ENCODE measurements at regions of chr6 and their contacts with region 1.

Region 1: DNA sequence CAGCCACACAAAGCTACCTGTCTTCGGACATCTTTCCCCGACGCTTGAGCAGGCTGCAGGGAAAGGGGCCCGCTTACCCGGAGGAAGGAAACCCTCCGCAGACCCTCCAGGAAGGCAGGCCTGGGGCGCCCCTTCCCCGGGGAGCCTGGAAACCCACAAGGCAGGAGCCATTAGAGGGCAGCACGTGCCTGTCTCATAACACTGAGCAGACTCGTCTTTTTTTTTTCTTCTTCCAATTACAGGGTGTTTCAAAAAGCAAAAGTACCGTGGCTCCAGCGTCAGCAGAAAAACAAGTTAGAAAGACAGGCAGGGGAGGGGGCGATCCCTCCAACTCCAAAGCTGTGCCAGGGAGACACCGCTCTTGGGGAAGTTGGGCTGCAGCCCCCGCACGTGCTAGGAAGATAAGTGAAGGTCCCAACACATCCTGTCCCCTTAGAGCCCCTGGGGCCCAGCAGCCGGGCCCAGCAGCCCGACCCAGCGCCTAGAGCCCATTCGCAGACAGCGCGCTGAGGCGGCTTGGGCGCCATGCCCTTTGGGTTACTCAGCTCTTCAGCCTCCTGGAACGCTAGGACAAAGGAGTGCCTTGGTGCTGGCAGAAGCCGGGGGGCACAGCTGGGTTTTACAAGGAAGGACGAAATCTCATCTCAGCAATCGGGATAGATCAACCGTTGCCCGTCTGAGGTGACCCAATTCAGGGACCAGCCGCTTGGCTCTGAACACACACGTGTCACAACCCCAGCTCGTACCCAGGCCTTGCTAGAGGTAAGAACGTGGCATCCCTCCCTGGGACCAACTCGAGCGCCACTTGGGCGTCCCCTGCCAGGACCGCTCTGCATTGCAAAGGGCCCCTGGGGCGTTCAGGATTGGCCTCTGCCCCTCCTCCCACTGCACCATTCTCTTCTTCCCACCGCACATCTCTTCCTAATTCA is 136.3 kb downstream of the LY86 start:
- DNase-seq: peak; percentile 77
- H3K4me3 Mint-ChIP-seq: peak overlapping the region; percentile 10
- H3K27ac Mint-ChIP-seq: peak overlapping the region; percentile 72
- H3K4me1 Mint-ChIP-seq: peaks cover 6% of the 10 kb centered on the region
- H3K27me3 Mint-ChIP-seq: no peaks in the 10 kb centered on the region
- CTCF ChIP-seq: peak; percentile 82

Region 2: DNA sequence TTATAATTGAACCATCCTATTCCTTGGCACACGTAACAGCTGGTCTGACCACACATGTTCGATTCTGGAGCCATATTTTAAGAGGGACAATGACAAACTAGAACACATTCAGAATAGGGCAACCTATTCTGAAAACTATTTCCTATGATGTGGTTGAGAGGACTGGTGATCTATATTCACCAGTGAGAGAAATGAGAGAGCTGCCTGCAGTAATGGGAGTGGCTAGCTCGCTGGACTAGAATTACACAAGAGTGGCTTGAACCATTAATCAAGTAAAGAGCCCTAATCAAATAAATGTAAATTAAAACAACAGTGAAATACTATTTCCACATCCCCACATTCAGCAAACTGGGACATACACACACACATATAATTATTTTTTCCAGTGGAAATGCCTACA is 191.6 kb before region 1 on chr6:
- CTCF ChIA-PET with region 1: no interaction called
- POLR2A ChIA-PET with region 1: no interaction called
- intact Hi-C with region 1: no loop called
- DNase-seq: no peak
- H3K4me3 Mint-ChIP-seq: no peak overlapping the region
- H3K27ac Mint-ChIP-seq: no peak overlapping the region
- H3K4me1 Mint-ChIP-seq: peaks cover 11% of the 10 kb centered on the region
- H3K27me3 Mint-ChIP-seq: no peaks in the 10 kb centered on the region
- CTCF ChIP-seq: no peak

Region 3: DNA sequence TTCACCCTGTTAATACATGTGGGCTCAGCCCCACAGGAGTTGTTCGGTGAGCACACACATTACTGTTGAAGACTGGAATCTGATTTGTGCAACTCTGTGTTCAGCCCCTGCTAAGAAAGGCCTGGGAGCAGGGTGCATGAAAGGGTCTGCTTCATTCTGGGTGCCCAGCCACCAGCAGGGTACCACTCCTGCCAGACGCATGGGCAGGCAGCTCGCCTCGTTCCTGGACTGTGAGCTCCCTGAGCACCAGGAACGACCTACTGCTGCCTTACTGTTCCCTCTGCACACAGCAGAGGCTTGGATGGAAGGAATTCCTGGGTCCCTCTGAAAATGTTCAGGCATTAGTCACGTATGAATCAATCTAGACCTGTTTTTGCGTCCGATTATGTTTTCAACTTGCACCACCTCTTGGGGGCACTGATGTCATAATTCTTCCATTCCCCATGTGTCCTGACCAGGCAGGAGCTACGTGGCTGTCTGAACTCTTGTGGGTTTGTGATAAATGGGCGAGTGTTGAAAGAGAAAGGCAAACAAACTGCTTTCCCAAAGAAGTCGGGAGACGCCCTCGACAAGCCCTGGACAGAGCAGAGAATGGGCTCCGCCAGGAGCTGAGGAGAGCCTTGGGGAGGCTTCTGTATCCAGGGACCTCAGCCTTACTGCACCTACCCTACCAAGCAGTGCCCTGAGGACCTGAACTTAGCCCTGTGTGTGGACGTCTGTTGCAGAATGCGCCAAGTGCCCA is 12.4 kb before region 1 on chr6:
- CTCF ChIA-PET with region 1: interaction called, 12 read pairs
- POLR2A ChIA-PET with region 1: interaction called, 7 read pairs
- intact Hi-C with region 1: no loop called
- DNase-seq: peak; percentile 96
- H3K4me3 Mint-ChIP-seq: peak overlapping the region; percentile 36
- H3K27ac Mint-ChIP-seq: peak overlapping the region; percentile 73
- H3K4me1 Mint-ChIP-seq: peaks cover 16% of the 10 kb centered on the region
- H3K27me3 Mint-ChIP-seq: no peaks in the 10 kb centered on the region
- CTCF ChIP-seq: no peak

Region 4: DNA sequence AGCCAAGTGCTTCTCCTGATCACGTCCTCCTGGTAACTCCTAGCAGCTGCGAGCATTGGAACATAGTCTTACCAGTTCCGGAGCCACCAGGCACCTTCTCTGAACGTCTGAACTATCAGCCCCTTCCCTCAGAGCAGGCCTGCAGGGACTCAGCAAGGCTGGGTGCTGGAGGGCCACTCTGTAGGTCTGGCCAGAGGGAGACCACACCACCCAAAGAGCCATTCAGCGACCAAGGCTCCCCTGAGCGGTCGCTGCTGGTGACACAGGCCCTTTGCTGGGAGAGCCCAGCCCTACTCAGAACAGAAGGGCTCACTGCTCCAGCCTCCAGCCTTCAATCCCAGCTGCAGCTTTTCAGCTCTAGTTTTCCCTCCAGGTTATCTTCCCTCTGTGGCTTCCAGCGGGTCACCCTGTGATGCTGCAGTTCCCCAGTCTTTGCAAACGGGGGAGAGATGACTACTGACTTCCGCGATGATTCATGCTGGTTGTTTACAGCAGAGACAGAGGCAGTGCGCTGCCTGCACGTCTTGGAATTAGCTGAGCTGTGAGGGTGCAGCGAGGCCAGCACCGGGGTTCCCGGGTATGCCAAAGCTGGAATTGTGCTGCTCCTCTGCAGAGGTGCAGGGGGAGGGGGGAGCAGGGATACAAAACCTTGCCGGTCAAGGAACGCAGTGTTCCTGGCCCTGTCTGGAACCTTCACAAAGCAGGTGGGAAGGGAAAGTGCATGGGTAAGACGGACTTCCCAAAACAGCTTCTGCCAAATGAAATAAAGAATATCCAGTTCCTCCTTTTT is 25.1 kb after region 1 on chr6:
- CTCF ChIA-PET with region 1: interaction called, 10 read pairs
- POLR2A ChIA-PET with region 1: interaction called, 6 read pairs
- intact Hi-C with region 1: no loop called
- DNase-seq: peak; percentile 92
- H3K4me3 Mint-ChIP-seq: peak overlapping the region; percentile 35
- H3K27ac Mint-ChIP-seq: peak overlapping the region; percentile 54
- H3K4me1 Mint-ChIP-seq: peaks cover 34% of the 10 kb centered on the region
- H3K27me3 Mint-ChIP-seq: no peaks in the 10 kb centered on the region
- CTCF ChIP-seq: no peak

Region 5: DNA sequence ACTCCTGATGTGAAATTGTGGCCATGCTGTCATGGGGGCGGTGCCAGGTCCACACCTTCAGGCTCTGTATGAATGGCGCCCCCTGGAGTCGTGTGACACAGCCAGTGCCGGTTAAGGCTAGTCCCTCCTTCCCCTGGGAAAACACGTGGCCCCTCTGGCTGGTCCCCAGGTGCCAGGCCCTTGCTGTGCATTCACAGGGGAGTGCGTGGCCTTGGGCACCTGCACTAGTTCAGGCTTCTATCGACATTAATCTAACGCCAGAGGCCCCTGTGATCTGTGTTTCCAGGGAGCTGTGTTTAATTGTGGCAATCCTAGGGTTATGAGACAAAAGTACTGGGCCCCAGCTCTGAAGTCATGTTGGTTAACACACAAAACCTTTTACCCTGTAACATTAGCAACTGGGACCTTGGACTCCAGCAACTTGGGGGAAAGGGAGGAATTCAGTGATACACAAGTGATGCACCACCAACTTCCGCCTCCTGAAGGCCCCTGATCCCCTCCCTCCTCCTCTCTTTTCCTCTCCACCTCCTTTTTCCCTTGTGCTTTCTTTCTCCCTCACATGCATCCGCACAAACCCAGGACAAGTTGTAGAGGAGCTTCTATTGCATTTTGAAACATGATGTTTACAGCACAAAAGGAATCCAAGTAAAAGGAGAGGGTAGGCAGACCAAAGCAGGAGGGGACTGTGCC is 514.2 kb after region 1 on chr6:
- CTCF ChIA-PET with region 1: interaction called, 25 read pairs
- POLR2A ChIA-PET with region 1: no interaction called
- intact Hi-C with region 1: loop called (anchors 1 kb)
- DNase-seq: peak; percentile 85
- H3K4me3 Mint-ChIP-seq: no peak overlapping the region
- H3K27ac Mint-ChIP-seq: peak overlapping the region; percentile 41
- H3K4me1 Mint-ChIP-seq: peaks cover 30% of the 10 kb centered on the region
- H3K27me3 Mint-ChIP-seq: no peaks in the 10 kb centered on the region
- CTCF ChIP-seq: peak; percentile 45

Measured in MCF 10A (cell line).